ENCODE measurements at regions of chr3 and their contacts with region 1.

Region 1: DNA sequence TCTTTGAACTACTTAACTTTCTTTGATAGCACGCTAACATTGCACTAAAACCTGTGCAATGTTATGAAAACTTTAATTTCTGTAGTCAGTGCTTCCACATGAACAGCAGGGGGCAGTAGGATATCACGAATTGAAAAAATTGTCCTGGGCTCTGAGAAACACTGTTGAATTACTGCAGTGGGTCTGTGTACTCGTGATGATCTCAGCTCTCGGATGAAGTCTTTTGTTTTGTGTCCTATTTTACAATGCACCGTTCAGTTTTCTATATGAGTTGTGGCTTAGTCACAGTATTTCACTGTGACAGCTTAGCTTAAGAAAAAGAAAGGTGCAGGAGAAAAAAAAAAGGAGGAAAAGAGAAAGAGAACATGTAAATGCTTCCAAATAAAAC is 141.3 kb upstream of the CCDC54 start:
- DNase-seq: peak; percentile 28
- H3K4me3 Mint-ChIP-seq: peak overlapping the region; percentile 71
- H3K27ac Mint-ChIP-seq: no peak overlapping the region
- H3K4me1 Mint-ChIP-seq: peaks cover 11% of the 10 kb centered on the region
- H3K27me3 Mint-ChIP-seq: peaks cover 23% of the 10 kb centered on the region

Region 2: DNA sequence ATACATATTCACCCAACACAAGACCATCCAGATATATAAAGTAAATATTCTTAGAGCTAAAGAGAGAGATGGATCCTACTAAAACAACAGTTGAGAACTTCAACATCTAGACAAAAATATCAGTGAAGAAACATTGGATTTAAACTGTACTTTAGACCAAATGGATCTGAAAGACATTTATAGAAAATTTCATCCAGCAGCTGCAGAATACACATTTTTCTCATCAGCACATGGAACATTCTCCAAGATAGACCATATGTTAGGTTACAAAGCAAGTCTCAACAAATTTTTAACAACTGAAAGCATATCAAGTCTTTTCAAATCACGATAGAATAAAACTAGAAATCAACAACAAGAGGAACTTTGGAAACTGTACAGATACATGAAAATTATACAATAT is 227.7 kb before region 1 on chr3:
- intact Hi-C with region 1: no loop called
- DNase-seq: no peak
- H3K4me3 Mint-ChIP-seq: no peak overlapping the region
- H3K27ac Mint-ChIP-seq: no peak overlapping the region
- H3K4me1 Mint-ChIP-seq: no peaks in the 10 kb centered on the region
- H3K27me3 Mint-ChIP-seq: no peaks in the 10 kb centered on the region

Region 3: DNA sequence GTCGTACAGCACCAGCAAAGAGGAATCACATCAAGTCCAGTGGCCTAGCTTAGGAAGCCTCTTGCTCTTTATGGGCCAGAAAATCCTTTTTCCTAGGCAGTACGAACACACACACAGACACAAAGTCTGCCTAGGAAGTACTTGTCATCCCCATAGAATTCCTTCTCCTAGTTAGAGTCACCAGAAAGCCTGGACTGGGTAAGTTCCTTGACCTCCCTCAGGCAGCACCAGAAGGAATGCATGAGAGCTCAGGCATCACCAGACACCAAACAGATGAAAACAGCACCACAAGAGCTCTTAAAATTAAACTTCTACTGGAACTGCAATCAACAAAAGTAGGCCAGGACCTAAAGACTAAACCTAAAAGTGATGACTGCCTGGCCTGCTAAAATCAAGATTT is 51.5 kb before region 1 on chr3:
- intact Hi-C with region 1: no loop called
- DNase-seq: no peak
- H3K4me3 Mint-ChIP-seq: no peak overlapping the region
- H3K27ac Mint-ChIP-seq: no peak overlapping the region
- H3K4me1 Mint-ChIP-seq: no peaks in the 10 kb centered on the region
- H3K27me3 Mint-ChIP-seq: no peaks in the 10 kb centered on the region

Region 4: DNA sequence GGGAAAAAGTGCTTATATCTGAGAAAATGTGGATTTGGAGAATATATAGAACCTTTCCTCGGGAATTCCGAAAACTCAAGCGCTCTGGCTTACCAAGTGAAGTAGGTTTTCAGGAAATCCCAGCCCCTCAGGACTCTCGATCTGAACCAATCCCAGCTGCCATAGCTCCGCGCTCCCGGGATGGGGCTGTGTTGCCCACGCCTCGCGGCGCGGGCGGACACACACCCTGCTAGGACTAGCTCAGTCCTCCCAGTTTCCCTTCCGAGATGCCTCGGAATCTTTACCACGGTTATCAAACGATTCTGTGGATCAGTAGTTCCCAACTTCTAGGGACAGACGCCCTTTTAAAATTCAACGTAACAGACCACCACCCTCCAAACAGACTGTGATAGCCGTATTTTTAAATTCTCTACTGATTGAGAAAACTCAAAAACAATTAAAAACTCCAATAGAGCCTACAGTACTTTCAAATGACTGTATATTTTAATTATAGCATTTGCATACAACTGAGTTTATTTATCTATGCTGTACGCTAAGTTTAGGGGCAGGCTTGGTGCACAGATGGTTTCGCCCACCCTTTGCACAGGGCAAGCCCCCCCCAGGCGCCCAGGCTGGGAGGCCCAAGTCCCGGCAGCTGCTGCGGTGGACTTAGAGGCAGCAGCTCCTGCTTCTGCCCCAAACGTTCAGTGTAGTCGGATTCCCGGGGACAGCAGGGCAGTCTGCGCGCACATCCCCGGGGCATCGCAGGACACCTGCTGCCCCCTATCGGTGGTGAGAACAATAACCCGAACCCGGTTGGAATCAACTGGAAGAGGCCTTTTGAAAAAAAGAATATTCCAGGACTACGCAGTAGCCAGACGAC is 193.6 kb after region 1 on chr3:
- intact Hi-C with region 1: loop called (anchors 2 kb)
- DNase-seq: peak; percentile 43
- H3K4me3 Mint-ChIP-seq: peak overlapping the region; percentile 53
- H3K27ac Mint-ChIP-seq: no peak overlapping the region
- H3K4me1 Mint-ChIP-seq: peaks cover 17% of the 10 kb centered on the region
- H3K27me3 Mint-ChIP-seq: peaks cover 49% of the 10 kb centered on the region

Region 5: GRCh38 chr3:107543666-107544065 is 307.7 kb after region 1 on chr3:
- intact Hi-C with region 1: loop called (anchors 5 kb)
- DNase-seq: no peak
- H3K4me3 Mint-ChIP-seq: no peak overlapping the region
- H3K27ac Mint-ChIP-seq: no peak overlapping the region
- H3K4me1 Mint-ChIP-seq: peaks cover 6% of the 10 kb centered on the region
- H3K27me3 Mint-ChIP-seq: no peaks in the 10 kb centered on the region

Region 6: GRCh38 chr3:107753480-107753879 is 517.6 kb after region 1 on chr3:
- intact Hi-C with region 1: loop called (anchors 5 kb)
- DNase-seq: no peak
- H3K4me3 Mint-ChIP-seq: no peak overlapping the region
- H3K27ac Mint-ChIP-seq: no peak overlapping the region
- H3K4me1 Mint-ChIP-seq: peaks cover 3% of the 10 kb centered on the region
- H3K27me3 Mint-ChIP-seq: no peaks in the 10 kb centered on the region

Region 7: DNA sequence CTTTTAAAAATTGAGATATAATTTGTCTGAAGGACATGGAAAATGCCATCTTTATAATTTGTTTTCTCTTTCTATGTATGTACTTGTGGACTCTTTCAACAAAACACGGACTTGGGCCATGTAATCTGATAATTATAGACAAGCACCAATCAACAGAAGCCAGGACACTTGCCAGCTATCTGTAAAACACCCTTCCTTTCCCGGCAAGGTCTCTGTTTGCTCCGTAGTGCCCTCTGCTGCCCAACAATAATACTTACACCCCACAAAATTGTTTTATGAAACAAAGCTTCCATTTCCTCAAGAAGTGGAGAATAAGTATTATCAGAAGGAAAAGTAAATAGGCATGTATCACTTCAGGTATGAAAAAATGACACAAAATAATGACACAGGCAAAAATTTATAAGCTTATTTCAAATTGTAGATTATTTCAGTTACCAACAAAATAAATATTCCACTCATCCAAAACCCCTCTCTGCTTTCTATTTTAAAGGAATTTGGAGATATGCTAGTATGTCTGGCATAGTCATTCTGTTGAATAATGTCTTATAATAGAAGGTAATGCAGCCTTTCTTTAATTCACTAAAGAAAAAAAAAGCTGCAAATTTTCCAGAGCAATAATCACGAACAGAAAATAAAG is 1241.7 kb after region 1 on chr3:
- intact Hi-C with region 1: loop called (anchors 5 kb)
- DNase-seq: peak; percentile 36
- H3K4me3 Mint-ChIP-seq: no peak overlapping the region
- H3K27ac Mint-ChIP-seq: no peak overlapping the region
- H3K4me1 Mint-ChIP-seq: peaks cover 1% of the 10 kb centered on the region
- H3K27me3 Mint-ChIP-seq: peaks cover 12% of the 10 kb centered on the region

Measured in activated T-helper 2 cell treated with anti-CD3 and anti-CD28 coated beads, Interferon-gamma antibody, Interleukin-2, Interleukin-4, amounts not matched to agents 10 μg/mL and 5 μg/mL and 100 μg/mL, durations not matched to agents 14 hours and 24 hours and 36 hours (primary cell).